Activated CD4-positive, alpha-beta T cell treated with anti-CD3 and anti-CD28 coated beads, Interleukin-2, amount 10 ng/mL, durations not matched to agents 24 days and 14 days (primary cell): ENCODE measurements at regions of chr16 and their contacts with region 1.

Region 1: DNA sequence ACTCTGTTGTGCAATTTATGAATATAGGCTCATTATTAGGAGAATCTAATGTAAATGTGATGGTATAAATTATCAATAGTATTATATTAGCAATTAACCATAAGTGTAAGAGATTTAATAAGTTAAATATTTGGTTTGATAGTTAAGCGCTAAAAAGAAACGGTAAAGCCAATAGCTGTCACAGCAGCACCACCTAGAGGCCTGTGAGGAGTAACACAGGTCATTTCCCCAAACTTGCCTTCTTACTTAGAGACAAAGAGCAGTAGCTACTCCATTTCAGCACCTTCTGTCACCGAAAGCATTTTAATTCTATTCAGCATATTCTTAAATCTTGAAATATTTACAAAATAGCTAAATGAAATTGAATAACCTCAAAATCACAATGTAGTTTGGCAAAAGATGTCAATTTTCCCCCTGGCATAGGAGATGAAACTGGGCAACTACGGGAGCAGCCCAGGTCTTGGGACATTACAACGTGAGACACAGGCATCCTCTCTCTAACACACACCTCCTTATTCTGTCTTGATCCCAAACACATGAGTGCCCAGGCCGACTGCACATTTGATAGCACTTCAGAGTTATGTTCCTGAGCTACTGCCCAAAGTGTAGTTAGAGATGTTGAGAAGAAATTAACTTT is 14.2 kb upstream of the DYNLRB2 start:
- DNase-seq: peak; percentile 88
- H3K4me3 Mint-ChIP-seq: no peak overlapping the region
- H3K27ac Mint-ChIP-seq: peak overlapping the region; percentile 17
- H3K4me1 Mint-ChIP-seq: peaks cover 15% of the 10 kb centered on the region
- H3K27me3 Mint-ChIP-seq: peaks cover 11% of the 10 kb centered on the region

Region 2: GRCh38 chr16:79278506-79278905 is 1248.0 kb before region 1 on chr16:
- intact Hi-C with region 1: loop called (anchors 10 kb)
- DNase-seq: peak; percentile 90
- H3K4me3 Mint-ChIP-seq: peak overlapping the region; percentile 74
- H3K27ac Mint-ChIP-seq: peak overlapping the region; percentile 85
- H3K4me1 Mint-ChIP-seq: peaks cover 62% of the 10 kb centered on the region
- H3K27me3 Mint-ChIP-seq: peaks cover 20% of the 10 kb centered on the region

Region 3: GRCh38 chr16:80824718-80825364 is 298.3 kb after region 1 on chr16:
- intact Hi-C with region 1: loop called (anchors 1 kb)
- DNase-seq: peak; percentile 84
- H3K4me3 Mint-ChIP-seq: no peak overlapping the region
- H3K27ac Mint-ChIP-seq: no peak overlapping the region
- H3K4me1 Mint-ChIP-seq: peaks cover 2% of the 10 kb centered on the region
- H3K27me3 Mint-ChIP-seq: peaks cover 24% of the 10 kb centered on the region

Region 4: DNA sequence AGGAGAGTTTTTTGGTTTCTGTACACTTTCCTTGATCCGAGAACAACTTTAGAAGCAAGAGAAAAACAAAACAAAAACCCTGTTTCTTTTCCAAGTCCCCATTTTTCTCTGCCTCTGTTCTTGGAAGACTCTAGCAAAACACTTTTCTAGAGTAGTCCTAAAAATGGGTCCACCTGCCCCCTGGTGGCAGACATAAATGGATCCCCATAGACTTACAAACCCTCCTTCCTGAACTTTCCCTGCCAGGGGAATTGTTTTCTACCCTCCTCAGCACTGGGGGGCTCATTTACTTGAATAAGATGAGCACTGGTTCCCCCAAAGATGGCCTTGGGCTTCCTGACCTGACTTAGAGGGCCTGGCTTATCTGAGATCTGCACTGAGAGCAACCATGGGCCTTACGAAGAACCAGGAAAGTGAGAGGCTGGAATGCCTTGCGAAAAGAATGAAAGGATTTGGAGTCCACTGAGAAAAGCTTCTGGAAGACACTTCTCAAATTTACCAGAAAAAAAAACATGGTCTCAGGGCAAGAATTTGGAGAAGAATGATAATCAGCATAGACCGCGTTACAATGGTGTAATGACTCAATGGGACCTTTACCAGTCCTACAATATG is 325.8 kb after region 1 on chr16:
- intact Hi-C with region 1: loop called (anchors 1 kb)
- DNase-seq: peak; percentile 68
- H3K4me3 Mint-ChIP-seq: no peak overlapping the region
- H3K27ac Mint-ChIP-seq: no peak overlapping the region
- H3K4me1 Mint-ChIP-seq: peaks cover under 1% of the 10 kb centered on the region
- H3K27me3 Mint-ChIP-seq: peaks cover 7% of the 10 kb centered on the region